Astrocyte of the cerebellum (primary cell): ENCODE measurements at regions of chr20 and their contacts with region 1.

Region 1: DNA sequence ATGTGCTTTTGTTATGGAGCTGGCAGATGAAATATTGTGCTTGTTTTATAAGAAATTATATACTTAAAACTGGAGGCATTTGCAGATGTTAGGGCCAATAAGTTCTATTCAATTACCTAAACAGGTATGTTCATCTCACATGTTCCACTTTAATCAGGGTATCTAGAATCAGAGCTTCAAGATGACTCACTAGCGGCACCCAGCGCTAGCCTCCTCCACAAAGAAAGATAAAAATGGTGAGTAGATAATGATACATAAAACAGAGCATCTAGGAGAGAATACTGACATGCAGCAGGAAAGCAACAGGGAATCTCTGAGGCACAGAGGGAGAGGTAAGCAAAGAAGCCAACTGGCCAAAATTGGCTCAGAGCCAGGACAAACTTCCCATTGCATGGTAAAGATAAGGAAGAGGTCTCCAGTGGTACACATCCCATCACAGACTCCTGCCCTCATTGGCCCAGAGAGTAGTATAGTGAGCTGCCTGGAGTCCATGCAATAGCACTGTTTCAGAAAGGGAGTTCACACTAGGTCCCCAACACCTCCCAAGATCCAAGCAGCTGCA is 200.7 kb upstream of the SPTLC3 start:
- DNase-seq: no peak
- H3K4me3 ChIP-seq: no peak overlapping the region
- CTCF ChIP-seq: no peak

Region 2: GRCh38 chr20:12860619-12861247 is 52.6 kb after region 1 on chr20:
- in situ Hi-C with region 1: loop called (anchors 5 kb)
- DNase-seq: no peak
- H3K4me3 ChIP-seq: no peak overlapping the region
- CTCF ChIP-seq: no peak